ENCODE measurements at regions of chr17 and their contacts with region 1.

Region 1: DNA sequence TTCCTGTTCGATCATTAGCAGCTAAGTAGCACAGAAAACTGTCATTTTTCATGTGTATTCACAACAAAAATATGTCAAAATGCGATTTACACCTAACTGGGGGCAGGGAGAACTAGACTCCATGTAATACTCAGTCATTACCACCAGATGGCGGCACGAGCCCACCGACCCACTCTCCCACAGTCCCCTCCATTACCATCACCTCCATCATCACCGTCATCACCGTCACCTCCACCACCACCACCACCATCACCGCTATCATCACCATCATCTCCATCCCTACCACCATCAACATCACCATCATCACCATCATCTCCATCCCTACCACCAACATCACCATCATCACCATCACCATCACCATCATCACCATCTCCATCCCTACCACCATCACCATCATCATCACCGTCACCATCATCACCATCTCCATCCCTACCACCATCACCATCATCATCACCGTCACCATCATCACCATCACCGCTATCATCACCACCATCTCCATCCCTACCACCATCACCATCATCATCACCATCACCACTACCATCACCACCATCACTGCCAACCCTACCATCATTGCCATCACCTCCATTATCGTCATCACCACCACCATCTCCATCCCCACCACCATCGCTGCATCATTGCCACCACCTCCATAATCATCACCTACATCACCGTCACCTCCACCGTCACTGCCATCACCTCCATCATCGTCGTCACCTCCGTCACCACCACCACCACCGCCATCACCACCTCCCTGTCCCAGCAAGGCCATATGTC is 14.4 kb downstream of the NDUFAF8 start:
- DNase-seq: peak; percentile 55 to 64 (median 62)
- H3K4me3 ChIP-seq: no peak overlapping the region
- H3K4me3 Mint-ChIP-seq: peak overlapping the region in 1 of 8 donors; percentile 29
- H3K27ac ChIP-seq: no peak overlapping the region
- H3K27ac Mint-ChIP-seq: peak overlapping the region; percentile 12 to 85 (median 28)
- H3K4me1 ChIP-seq: no peaks in the 10 kb centered on the region
- H3K4me1 Mint-ChIP-seq: peaks cover 7 to 11% (median 8%) of the 10 kb centered on the region in 4 donors
- H3K27me3 ChIP-seq: no peaks in the 10 kb centered on the region
- H3K27me3 Mint-ChIP-seq: no peaks in the 10 kb centered on the region

Region 2: GRCh38 chr17:81207610-81208581 is 45.6 kb before region 1 on chr17:
- CTCF ChIA-PET with region 1: no interaction called
- POLR2A ChIA-PET with region 1: no interaction called
- intact Hi-C with region 1: no loop called
- DNase-seq: no peak
- H3K4me3 ChIP-seq: no peak overlapping the region
- H3K4me3 Mint-ChIP-seq: no peak overlapping the region
- H3K27ac ChIP-seq: no peak overlapping the region
- H3K27ac Mint-ChIP-seq: peak overlapping the region in 1 of 7 donors; percentile 83
- H3K4me1 ChIP-seq: no peaks in the 10 kb centered on the region
- H3K4me1 Mint-ChIP-seq: peaks cover 0 to 2% (median 0%) of the 10 kb centered on the region in 4 donors
- H3K27me3 ChIP-seq: no peaks in the 10 kb centered on the region
- H3K27me3 Mint-ChIP-seq: no peaks in the 10 kb centered on the region

Region 3: GRCh38 chr17:81537343-81537855 is 283.9 kb after region 1 on chr17:
- CTCF ChIA-PET with region 1: interaction called, 3 read pairs
- POLR2A ChIA-PET with region 1: no interaction called
- intact Hi-C with region 1: loop called (anchors 5 kb)
- DNase-seq: peak in 1 of 5 donors; percentile 26
- H3K4me3 ChIP-seq: no peak overlapping the region
- H3K4me3 Mint-ChIP-seq: no peak overlapping the region
- H3K27ac ChIP-seq: no peak overlapping the region
- H3K27ac Mint-ChIP-seq: no peak overlapping the region
- H3K4me1 ChIP-seq: peaks cover 7% of the 10 kb centered on the region
- H3K4me1 Mint-ChIP-seq: no peaks in the 10 kb centered on the region
- H3K27me3 ChIP-seq: peaks cover 3% of the 10 kb centered on the region
- H3K27me3 Mint-ChIP-seq: peaks cover 10% of the 10 kb centered on the region in 2 donors